ENCODE measurements at regions of chr10 and their contacts with region 1.

Region 1: DNA sequence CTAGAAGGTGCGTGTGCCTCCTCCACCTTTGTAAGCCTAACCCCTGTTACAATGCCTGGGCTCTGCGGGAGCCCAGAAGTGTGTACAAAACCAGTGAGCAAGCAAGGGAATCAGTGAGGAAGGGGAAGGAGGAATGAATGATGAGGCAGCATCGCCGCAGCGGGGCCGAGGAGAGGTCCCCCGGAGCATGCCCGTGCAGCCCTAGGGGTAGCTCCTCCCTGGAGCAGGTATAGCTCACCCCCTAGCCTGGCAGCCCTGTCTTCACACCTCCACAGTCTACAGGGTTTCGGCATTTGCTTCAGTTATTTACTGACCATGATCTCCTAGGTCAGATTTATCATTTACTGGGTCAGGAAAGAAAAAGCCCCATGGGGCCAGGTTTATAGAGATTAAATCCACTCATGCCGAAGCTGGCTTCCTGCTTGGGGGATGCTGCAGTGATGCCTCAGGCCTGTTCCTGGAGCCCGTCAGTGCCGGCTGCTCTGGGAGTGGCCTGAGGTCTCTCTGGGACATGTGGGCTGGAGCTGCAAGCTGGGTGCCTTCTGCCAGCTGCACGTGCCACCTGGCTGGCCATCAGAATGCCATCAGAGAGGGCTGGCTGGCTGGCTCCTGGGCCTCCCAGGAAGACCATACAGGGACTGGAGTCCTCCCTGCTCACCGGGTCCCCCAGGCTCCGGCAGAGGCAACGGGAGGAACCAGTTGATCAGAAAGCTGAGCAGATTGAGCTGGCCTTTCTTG is 138.9 kb downstream of the GRK5 start:
- DNase-seq: no peak
- ATAC-seq: no peak
- H3K4me3 ChIP-seq: no peak overlapping the region
- H3K27ac ChIP-seq: no peak overlapping the region
- H3K4me1 ChIP-seq: peaks cover 19 to 25% of the 10 kb centered on the region in 2 donors
- H3K27me3 ChIP-seq: no peaks in the 10 kb centered on the region
- CTCF ChIP-seq: no peak
- POLR2A ChIP-seq: no peak

Region 2: DNA sequence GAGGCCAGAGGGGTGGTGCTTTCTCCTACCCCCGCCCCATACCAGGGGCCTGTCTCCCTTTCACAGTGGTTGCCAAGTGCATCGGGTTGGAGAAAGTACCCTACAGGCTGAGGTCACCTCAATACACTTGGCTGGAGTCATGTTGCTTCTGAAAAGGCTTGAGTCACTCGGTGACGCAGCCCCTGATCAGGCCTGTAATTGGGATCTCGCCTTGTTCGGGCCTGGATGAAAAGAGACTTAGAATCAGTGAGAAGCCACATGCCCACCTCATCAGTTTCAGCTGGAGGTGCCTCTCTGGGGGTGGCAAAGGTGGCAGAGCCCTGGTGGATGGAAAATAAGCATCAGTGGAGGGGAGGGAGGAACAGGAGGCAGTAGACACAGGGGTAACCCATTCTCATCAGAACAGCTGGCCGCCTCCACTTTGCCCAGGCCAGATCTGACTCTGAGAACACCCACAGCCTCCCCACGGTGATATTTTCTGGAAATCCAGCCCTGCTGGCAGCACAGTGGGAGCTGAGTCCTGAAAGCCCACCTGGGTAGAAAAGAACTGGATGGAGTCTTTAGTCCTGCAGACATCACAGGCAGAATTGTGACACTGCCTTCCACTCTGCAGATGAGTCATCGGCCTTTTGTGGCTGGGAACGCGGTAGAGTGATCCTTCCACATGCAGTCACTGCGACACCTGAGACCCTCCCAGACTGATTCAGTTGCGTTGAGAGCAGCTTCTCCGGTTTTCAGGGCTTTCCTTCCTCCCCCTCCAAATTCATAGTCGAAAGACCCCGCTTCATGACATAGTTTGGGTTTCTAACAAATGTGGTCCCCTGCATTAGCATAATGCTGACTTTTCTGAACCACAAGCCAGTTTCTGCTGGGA is 30.9 kb before region 1 on chr10:
- in situ Hi-C with region 1: no loop called
- intact Hi-C with region 1: loop called (anchors 1 kb)
- DNase-seq: peak; percentile 68 to 83
- ATAC-seq: peak; percentile 97 to 98
- H3K4me3 ChIP-seq: no peak overlapping the region
- H3K27ac ChIP-seq: peak overlapping the region; percentile 71 to 75 (median 72)
- H3K4me1 ChIP-seq: peaks cover 20 to 26% of the 10 kb centered on the region in 2 donors
- H3K27me3 ChIP-seq: no peaks in the 10 kb centered on the region
- CTCF ChIP-seq: no peak
- POLR2A ChIP-seq: no peak

Region 3: DNA sequence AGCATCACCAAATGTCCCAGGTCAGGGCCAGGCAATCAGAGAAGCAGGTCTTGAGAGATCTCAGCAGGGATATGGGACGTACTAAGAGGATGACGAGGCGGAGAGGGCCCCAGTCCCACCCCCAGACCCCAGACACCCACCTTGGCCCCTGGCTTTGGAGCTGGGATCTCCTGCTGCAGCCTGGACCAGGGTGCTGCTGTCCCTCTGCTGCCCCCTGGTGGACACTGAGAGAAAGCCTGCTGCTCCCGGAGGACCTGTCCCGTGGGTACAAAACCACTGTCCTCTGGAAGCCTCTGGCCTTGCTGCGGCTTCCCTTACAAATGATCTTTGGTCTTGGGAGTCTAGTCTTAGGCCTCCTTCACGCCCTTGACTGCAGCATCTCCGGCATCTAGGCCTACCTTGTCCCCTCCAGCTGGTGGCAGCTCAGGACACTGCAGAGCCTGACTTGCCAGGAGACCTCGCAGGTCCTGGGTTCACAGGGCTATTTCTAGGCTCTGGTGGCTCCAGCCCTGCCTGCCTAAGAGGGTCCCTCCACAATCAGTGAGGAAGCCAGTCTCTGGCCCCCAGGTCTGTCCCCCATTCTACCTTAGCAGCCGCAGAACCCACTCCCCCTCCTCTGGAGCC is 99.2 kb after region 1 on chr10:
- in situ Hi-C with region 1: no loop called
- intact Hi-C with region 1: no loop called
- DNase-seq: peak; percentile 68 to 72
- ATAC-seq: peak; percentile 61 to 78
- H3K4me3 ChIP-seq: no peak overlapping the region
- H3K27ac ChIP-seq: no peak overlapping the region
- H3K4me1 ChIP-seq: peaks cover 4 to 9% of the 10 kb centered on the region in 2 donors
- H3K27me3 ChIP-seq: no peaks in the 10 kb centered on the region
- CTCF ChIP-seq: peak; percentile 76 to 98 (median 93)
- POLR2A ChIP-seq: no peak

Measured in gastrocnemius medialis (tissue), 4 donors.